HEK293T (cell line): ENCODE measurements at regions of chrX and their contacts with region 1.

Region 1: DNA sequence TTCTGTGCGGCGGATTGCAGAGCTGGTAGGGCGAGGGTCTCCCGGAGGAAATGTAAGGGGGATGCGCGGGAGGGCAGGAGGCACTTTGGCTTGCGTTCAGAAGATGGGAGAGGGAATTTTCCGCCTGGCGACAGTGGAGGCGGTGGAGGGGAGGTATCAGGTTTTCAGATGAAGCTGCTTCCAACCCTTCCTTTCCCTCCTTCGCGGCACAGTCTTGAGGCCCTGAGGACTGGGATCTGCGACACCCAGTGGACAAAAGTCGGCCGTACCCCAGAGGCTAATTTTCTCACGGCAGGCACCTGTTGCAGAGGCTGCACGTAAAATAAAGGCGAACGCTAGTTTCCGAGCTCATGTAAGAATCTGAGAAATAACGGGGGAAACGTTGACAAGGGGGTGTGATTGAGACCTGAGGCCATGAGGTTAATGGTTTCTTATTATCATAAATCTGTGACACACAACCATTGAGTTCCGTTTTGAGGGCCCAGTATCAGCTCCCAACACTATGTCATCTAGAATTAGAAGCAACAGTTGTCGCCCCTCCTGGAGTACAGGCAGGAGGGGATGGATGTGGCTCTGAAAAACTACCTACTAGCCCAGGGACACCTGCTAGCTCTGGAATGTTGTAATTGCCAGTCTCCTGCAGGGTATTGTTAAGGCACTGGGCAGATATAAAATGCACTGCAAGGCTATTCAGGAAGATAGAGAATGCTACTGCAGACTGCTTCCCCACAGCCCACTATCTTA is 1.1 kb downstream of the ZCCHC18 start:
- DNase-seq: peak; percentile 77

Region 2: DNA sequence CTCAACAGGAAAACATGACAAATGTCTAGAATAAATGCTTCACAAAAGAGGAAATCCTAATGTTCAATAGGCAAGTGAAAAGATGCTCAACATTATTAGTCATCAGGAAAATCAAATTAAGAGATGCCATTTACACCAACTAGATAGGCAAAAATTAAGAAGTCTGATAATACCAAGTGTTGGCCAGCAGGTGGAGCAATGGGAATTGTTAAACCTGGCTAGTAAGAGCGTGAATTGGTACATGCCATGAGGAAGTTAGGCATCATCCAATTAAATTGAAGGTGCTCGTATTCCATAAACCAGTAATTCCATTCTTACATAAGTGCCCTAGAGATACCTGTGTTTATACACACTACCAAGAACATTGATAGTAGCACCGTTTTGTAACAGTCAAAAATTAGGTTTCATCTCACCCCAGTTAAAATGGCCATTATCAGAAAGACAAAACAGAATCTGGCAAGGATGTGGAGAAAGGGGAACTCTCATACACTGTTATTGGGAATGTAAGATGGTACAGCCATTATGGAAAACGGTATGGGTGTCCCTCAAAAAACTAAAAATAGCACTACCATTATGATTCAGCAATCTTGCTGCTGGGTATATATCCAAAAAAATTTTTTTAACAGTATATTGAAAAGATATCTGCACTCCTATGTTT is 15.1 kb before region 1 on chrX:
- CTCF ChIA-PET with region 1: interaction called, 8 read pairs
- POLR2A ChIA-PET with region 1: interaction called, 14 read pairs
- DNase-seq: peak; percentile 66

Region 3: DNA sequence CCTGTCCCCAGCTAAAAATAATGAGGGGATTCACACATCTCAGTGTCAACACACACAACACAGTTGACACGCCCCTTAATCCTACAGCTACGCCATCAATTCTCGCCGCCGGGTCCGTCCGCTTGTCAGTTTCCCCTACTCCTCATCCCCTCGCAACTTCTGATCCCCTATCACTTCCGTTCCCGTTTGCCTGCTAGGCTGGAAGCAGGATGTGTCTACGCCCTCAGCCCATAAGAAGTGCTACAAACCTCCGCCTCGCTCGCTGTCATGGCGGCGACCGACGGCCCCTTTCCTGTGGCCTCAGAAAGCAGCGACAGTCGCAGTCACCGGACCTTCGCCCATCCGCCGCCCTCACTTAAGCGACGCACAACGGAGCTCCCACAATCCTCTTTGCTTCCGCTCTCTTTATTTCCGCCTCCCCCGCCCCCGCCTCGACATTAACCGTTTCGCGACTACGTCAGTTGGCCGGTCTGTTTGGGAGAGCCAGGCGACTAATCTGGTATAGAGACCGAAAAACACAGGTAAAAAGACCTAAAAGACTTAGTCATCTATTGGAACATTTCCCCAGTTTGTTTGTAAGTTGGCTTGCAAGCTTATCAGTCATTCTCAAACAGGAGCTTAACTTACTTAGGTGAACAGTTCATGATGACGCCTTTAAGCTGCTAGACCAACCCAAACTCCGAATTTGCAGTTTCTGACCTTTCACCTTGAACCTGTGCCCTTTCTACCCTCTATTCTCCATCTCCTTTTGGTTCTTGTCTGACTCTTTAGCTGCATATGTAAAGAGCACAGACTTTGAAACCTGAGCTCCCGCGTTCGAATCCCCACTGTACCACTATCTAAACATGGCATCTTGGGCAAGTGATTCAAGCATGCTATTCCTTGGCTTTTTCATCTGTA is 43.5 kb after region 1 on chrX and contains the start of gene SLC25A53:
- CTCF ChIA-PET with region 1: no interaction called
- POLR2A ChIA-PET with region 1: interaction called, 12 read pairs
- DNase-seq: peak; percentile 88